Right ventricle myocardium inferior (tissue), 1 donor: ENCODE measurements at regions of chr9 and their contacts with region 1.

Region 1: DNA sequence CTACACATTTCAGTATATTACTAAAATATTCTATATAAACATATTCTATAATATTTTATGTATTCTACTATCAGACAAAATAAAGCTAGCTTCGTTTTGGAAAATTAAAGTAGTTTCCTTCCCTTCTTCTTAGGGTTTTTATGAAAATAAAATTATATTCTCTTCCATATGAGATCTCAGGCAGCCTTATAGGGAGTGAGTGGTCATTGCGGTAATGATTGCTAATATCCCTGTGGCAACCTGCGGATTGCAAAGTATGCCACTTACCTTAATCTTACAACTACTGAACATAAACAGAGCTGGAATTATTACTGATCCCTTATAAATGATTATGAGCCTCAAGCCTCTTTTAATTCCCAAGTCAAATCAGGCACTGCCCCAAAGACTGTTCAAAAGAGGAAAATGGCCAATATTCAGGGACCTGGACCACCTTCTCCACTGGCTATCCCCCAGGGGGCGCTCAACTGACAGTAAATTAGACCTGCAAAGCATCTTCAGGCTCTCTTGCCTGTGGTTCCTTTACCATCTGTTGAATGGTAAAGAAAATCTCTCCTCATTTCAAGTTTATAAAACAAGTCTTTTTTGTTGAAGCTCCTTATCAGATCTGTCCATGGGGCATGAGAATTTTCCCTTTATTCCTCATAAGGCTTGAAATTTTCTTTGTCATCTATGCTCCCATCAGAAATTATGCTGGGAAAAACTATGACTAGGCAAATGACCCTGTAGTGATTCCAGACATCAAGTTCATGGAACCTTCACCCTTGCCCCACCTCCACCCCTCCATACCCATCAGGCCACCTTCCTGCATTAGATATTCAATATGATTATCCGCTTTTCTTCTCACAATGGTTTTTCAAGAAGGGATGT is 163.9 kb downstream of the CEMIP2 start:
- DNase-seq: peak; percentile 84
- ATAC-seq: peak; percentile 68

Region 2: GRCh38 chr9:71079451-71079850 is 525.0 kb before region 1 on chr9:
- intact Hi-C with region 1: no loop called
- DNase-seq: no peak
- ATAC-seq: no peak

Region 3: GRCh38 chr9:71663931-71664459 is 59.6 kb after region 1 on chr9:
- intact Hi-C with region 1: loop called (anchors 2 kb)
- DNase-seq: no peak
- ATAC-seq: no peak

Region 4: GRCh38 chr9:71680189-71680980 is 76.0 kb after region 1 on chr9:
- intact Hi-C with region 1: no loop called
- DNase-seq: no peak
- ATAC-seq: no peak

Region 5: DNA sequence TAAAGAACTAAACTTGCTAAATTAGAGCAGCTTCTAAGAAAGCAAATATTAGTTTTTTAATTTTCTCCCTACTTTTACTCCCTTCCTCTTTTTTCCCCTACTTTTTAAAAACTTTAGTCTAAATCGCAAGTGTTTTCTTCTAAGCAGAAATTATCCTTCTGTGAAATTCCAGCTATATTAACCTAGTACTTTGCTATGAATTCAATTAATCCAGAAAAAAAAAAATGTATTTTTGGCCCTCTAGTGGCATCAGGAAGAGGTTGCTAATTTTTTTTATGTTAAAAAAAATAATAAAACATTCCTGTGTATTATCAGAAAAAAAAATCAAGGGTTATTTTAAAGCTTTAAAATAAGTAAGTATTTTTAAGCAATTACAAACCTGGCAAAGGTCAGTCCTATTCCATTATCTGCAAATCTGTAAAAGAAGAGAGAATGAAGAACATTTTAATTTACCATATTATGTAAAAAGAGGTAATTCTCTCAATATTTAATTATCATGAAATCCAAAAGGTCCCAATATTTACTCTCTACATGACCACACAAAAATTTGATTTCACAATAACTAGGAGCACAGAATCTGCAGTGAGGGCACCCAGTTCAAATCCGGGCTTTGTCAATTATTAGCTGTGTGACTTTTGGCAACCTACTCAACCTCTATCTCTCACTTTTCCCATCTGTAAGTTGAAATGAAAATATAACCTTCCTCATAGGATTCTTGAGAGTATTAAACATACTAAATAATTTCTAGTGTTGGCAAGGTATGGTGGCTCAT is 111.9 kb after region 1 on chr9:
- intact Hi-C with region 1: loop called (anchors 5 kb)
- DNase-seq: no peak
- ATAC-seq: no peak